ENCODE measurements at regions of chr6 and their contacts with region 1.

Region 1: GRCh38 chr6:3825851-3826581 is 23.2 kb upstream of the FAM50B start:
- DNase-seq: peak; percentile 88
- ATAC-seq: peak; percentile 95

Region 2: GRCh38 chr6:3623451-3624249 is 202.4 kb before region 1 on chr6:
- intact Hi-C with region 1: no loop called
- DNase-seq: no peak
- ATAC-seq: no peak

Region 3: DNA sequence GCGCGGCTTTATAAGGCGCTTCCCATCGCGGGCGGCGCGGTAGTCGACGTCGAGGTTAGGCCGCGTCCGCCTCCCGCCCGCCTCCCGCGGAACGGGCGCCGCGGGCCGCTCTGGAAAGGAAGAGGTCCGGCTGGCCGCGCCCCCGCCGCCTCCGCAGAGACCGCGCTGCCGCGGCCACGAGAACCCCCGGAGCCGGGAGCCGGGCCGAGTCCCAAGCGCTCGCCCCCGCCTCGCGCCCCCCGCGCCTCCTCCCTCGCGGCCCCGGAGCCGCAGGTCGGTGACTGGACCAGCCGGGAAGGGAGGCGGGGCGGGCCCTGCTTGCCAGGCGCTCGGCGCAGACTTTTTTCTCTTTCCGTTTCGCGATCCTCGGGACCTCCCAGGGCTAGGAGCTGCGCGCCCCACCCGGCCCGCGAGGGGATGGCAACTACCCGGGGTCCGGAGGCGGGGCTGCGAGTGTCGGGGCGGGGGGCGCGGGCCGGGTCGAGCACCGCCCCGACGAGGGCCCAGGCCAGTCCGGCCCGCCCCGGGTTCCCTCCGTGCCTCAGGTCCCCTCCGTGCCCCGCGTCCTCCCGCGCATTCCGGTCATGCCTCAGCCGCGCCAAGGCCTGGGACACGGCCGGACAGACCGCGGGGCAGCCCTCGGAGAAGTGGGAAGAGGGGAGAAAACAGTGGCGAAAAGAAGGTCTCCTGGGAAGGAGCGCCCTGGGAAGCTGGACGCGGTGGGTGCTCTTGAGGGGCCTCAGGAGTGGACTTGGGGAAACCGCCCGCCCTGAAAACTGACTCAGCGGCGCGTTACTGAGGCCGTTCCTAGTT is 74.1 kb before region 1 on chr6:
- intact Hi-C with region 1: loop called (anchors 5 kb)
- DNase-seq: peak; percentile 93
- ATAC-seq: peak; percentile 77

Measured in sciatic nerve (tissue), 2 donors.